ENCODE measurements at regions of chr15 and their contacts with region 1.

Region 1: DNA sequence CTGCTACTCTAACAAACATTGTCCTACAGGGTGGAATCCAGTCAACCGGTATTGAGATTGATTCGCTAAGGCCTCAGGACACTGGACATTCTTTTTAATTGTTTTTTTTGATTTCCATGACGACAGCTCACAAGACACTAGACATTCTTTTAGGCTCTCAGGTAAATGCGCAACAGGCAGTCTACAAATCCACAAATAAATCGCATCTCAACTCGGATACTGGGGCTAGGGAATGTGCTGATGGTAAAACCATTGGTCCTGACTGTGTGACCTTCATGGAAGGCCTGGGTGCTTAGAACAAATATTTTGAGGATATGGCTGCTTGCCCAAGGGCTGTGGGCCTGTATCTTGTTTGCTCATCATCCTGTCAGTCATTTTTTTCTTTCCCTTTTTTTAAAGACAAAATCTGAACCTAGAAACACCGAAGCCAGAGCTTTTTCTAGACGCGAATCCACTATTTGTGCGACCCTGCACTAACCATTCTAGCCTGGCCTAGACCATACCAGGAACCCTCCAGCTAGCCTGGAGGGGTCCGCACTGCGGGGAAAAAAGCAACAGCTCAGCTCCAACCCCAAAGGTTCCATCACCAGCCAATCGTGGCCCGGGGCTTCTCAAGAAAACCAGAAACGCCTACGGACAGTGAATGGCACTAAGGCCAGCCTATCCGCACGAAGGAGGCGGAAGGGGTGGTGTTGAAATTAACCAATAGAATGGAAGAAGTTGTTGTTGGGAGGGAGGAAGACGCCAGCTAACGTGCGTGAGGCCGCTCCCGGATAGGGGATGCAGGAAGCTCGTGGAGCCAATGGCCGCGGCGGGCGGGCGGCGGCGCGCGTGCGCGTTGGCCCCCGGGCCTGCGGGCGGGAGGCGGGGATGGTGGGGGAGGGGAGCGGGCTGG is 18.1 kb upstream of the CHD2 start:
- DNase-seq: peak; percentile 95 to 99 (median 98)
- H3K4me3 ChIP-seq: peak overlapping the region; percentile 51
- H3K4me3 Mint-ChIP-seq: peak overlapping the region; percentile 88 to 91 (median 89)
- H3K27ac ChIP-seq: peak overlapping the region; percentile 76
- H3K27ac Mint-ChIP-seq: peak overlapping the region; percentile 94 to 98 (median 98)
- H3K4me1 ChIP-seq: peaks cover 64% of the 10 kb centered on the region
- H3K4me1 Mint-ChIP-seq: peaks cover 58 to 70% (median 62%) of the 10 kb centered on the region in 3 donors
- H3K27me3 ChIP-seq: no peaks in the 10 kb centered on the region
- H3K27me3 Mint-ChIP-seq: peaks cover 0 to 7% of the 10 kb centered on the region in 2 donors

Region 2: GRCh38 chr15:92820236-92821021 is 61.6 kb before region 1 on chr15:
- CTCF ChIA-PET with region 1: interaction called, 25 read pairs
- POLR2A ChIA-PET with region 1: interaction called, 65 read pairs
- DNase-seq: peak; percentile 75 to 90 (median 86)
- H3K4me3 ChIP-seq: peak overlapping the region; percentile 60
- H3K4me3 Mint-ChIP-seq: peak overlapping the region; percentile 85 to 96 (median 92)
- H3K27ac ChIP-seq: peak overlapping the region; percentile 58
- H3K27ac Mint-ChIP-seq: peak overlapping the region; percentile 95 to 98 (median 97)
- H3K4me1 ChIP-seq: peaks cover 55% of the 10 kb centered on the region
- H3K4me1 Mint-ChIP-seq: peaks cover 32 to 60% (median 49%) of the 10 kb centered on the region in 3 donors
- H3K27me3 ChIP-seq: no peaks in the 10 kb centered on the region
- H3K27me3 Mint-ChIP-seq: no peaks in the 10 kb centered on the region

Region 3: GRCh38 chr15:92831655-92832328 is 50.3 kb before region 1 on chr15:
- CTCF ChIA-PET with region 1: interaction called, 48 read pairs
- POLR2A ChIA-PET with region 1: interaction called, 151 read pairs
- DNase-seq: peak; percentile 70 to 97 (median 84)
- H3K4me3 ChIP-seq: peak overlapping the region; percentile 30
- H3K4me3 Mint-ChIP-seq: peak overlapping the region; percentile 40 to 88 (median 80)
- H3K27ac ChIP-seq: peak overlapping the region; percentile 83
- H3K27ac Mint-ChIP-seq: peak overlapping the region; percentile 95 to 99 (median 97)
- H3K4me1 ChIP-seq: peaks cover 45% of the 10 kb centered on the region
- H3K4me1 Mint-ChIP-seq: peaks cover 34 to 45% (median 44%) of the 10 kb centered on the region in 3 donors
- H3K27me3 ChIP-seq: no peaks in the 10 kb centered on the region
- H3K27me3 Mint-ChIP-seq: peaks cover 0 to 2% of the 10 kb centered on the region in 2 donors

Region 4: DNA sequence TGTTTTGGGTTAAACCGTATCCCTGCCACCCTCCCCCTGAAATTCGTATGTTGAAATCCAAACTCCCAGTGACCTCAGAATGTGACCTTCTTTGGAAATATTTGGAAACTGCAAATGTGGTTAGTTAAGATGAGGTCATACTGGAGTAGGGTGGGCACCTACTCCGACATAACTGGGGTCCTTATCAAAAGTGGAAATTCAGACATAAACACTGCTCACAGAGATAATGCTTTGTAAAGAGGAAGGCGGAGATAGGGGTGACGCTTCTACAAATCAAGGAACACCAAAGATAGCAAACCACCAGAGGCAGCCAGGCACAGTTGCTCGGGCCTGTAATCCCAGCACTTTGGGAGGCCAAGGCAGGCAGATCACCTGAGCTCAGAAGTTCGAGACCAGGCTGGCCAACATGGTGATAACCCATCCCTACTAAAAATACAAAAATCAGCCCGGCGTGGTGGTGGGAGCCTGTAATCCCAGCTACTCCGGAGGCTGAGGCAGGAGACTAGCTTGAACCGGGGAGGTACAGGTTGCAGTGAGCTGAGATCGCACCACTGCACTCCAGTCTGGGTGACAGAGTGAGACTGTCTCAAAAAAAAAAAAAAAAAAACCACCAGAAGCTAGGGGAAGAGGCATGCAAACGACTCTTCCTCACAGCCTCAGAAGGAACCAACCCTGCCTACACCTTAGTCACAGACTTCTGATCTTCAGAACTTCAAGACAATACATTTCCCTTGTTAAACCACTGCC is 33.0 kb before region 1 on chr15:
- CTCF ChIA-PET with region 1: interaction called, 4 read pairs
- POLR2A ChIA-PET with region 1: interaction called, 23 read pairs
- DNase-seq: peak in 3 of 5 donors; percentile 58 to 67 (median 64)
- H3K4me3 ChIP-seq: no peak overlapping the region
- H3K4me3 Mint-ChIP-seq: peak overlapping the region in 5 of 7 donors; percentile 29 to 58 (median 50)
- H3K27ac ChIP-seq: no peak overlapping the region
- H3K27ac Mint-ChIP-seq: peak overlapping the region; percentile 76 to 96 (median 84)
- H3K4me1 ChIP-seq: peaks cover 56% of the 10 kb centered on the region
- H3K4me1 Mint-ChIP-seq: peaks cover 43 to 57% (median 55%) of the 10 kb centered on the region in 3 donors
- H3K27me3 ChIP-seq: no peaks in the 10 kb centered on the region
- H3K27me3 Mint-ChIP-seq: no peaks in the 10 kb centered on the region

Region 5: GRCh38 chr15:92896561-92896960 is 14.5 kb after region 1 on chr15:
- CTCF ChIA-PET with region 1: interaction called, 79 read pairs
- POLR2A ChIA-PET with region 1: interaction called, 455 read pairs
- DNase-seq: peak in 1 of 5 donors; percentile 3
- H3K4me3 ChIP-seq: no peak overlapping the region
- H3K4me3 Mint-ChIP-seq: peak overlapping the region; percentile 23 to 61 (median 37)
- H3K27ac ChIP-seq: peak overlapping the region; percentile 22
- H3K27ac Mint-ChIP-seq: peak overlapping the region; percentile 41 to 92 (median 77)
- H3K4me1 ChIP-seq: peaks cover 82% of the 10 kb centered on the region
- H3K4me1 Mint-ChIP-seq: peaks cover 65 to 85% (median 82%) of the 10 kb centered on the region in 3 donors
- H3K27me3 ChIP-seq: no peaks in the 10 kb centered on the region
- H3K27me3 Mint-ChIP-seq: peaks cover 0 to 6% of the 10 kb centered on the region in 2 donors

Region 6: DNA sequence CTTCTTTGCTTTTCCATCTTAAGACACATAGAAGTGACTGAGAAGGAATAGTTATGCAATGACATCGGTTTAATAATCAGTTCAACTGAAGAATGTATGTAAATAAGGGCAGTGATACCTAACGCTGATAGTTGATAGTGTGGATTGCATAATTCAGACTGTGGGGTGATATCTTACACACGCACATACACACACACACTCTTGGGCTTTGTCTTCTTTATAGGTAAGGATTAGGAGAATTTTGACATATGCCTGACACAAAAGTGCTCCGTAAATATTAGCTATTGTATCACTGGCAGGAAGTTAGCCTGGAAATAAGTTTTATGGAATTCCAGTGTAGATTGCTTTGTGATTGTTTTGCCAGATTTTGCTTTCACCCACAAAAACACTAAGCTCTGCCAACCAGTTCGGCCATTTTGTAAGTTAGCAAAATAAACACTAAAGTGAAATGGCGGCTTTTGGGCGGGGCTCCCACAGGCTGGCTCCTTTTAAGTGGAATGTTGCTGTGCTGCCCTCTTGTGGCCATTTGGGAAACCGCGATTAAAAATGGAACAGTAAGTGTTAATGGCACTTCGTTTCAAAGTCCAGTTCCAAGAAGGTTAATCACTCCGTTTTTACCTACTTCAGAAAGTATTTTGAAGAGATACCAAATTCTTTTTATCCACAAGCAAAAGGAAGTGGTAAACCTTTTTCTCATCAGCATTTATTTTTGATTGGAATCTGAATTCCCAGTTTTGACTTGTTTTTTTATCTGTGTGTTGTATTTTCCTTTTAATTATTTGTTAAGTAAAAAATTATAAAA is 35.8 kb after region 1 on chr15:
- CTCF ChIA-PET with region 1: interaction called, 17 read pairs
- POLR2A ChIA-PET with region 1: interaction called, 15 read pairs
- DNase-seq: peak; percentile 83 to 93 (median 86)
- H3K4me3 ChIP-seq: peak overlapping the region; percentile 25
- H3K4me3 Mint-ChIP-seq: peak overlapping the region in 6 of 7 donors; percentile 55 to 79 (median 64)
- H3K27ac ChIP-seq: peak overlapping the region; percentile 20
- H3K27ac Mint-ChIP-seq: peak overlapping the region; percentile 67 to 100 (median 93)
- H3K4me1 ChIP-seq: peaks cover 90% of the 10 kb centered on the region
- H3K4me1 Mint-ChIP-seq: peaks cover 74 to 94% (median 90%) of the 10 kb centered on the region in 3 donors
- H3K27me3 ChIP-seq: no peaks in the 10 kb centered on the region
- H3K27me3 Mint-ChIP-seq: peaks cover 0 to 3% of the 10 kb centered on the region in 2 donors

Region 7: GRCh38 chr15:92954578-92954977 is 72.5 kb after region 1 on chr15:
- CTCF ChIA-PET with region 1: no interaction called
- POLR2A ChIA-PET with region 1: no interaction called
- DNase-seq: no peak
- H3K4me3 ChIP-seq: no peak overlapping the region
- H3K4me3 Mint-ChIP-seq: no peak overlapping the region
- H3K27ac ChIP-seq: no peak overlapping the region
- H3K27ac Mint-ChIP-seq: peak overlapping the region in 2 of 8 donors; percentile 21 to 32
- H3K4me1 ChIP-seq: peaks cover 10% of the 10 kb centered on the region
- H3K4me1 Mint-ChIP-seq: peaks cover 26 to 39% (median 39%) of the 10 kb centered on the region in 3 donors
- H3K27me3 ChIP-seq: no peaks in the 10 kb centered on the region
- H3K27me3 Mint-ChIP-seq: no peaks in the 10 kb centered on the region

Measured in CD8-positive, alpha-beta memory T cell (primary cell).